Endothelial cell of umbilical vein (primary cell): ENCODE measurements at regions of chr12 and their contacts with region 1.

Region 1: DNA sequence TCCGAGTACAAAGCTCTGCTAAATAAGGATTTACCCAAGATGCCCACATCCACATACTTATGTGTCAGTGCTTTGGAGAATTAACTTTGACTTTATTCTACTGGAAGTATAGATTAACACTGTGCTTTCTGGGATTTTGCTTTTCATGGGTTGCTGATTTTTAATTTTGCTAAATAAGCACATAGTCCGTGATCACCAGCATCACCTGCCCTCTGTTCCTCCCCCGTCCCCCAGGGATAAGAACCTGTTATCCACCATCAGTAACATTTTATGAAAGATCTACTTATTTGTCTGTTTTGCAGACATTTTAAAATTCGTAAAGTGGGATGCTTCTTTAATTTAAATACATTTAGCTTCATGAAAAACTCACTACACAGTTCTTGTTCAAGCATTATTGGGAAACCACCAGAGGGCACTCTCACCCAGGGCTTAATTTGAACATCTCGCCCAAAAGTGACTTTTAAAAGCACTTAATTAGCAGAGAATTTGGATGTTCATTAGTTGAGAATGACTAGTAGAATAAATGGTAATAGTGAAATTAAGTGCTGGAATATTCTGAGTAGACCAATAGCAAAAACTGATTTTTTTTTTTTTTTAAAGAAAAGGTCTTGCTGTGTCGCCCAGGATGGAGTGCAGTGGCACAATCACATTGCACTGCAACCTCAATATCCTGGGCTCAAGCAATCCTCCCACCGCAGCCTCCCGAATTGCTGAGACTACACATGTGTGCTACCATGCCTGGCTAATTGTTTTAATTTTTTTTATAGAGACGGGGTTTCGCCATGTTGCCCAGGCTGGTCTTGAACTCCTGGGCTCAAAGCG is 35.7 kb downstream of the MRPL42 start:
- DNase-seq: peak; percentile 57
- H3K4me3 ChIP-seq: no peak overlapping the region
- H3K27ac ChIP-seq: no peak overlapping the region
- H3K4me1 ChIP-seq: no peaks in the 10 kb centered on the region
- H3K27me3 ChIP-seq: no peaks in the 10 kb centered on the region
- CTCF ChIP-seq: peak; percentile 55 to 60
- POLR2A ChIP-seq: no peak

Region 2: GRCh38 chr12:92995258-92995903 is 507.6 kb before region 1 on chr12:
- CTCF ChIA-PET with region 1: no interaction called
- POLR2A ChIA-PET with region 1: no interaction called
- dilution Hi-C with region 1: no loop called
- intact Hi-C with region 1: no loop called
- DNase-seq: no peak
- H3K4me3 ChIP-seq: no peak overlapping the region
- H3K27ac ChIP-seq: no peak overlapping the region
- H3K4me1 ChIP-seq: no peaks in the 10 kb centered on the region
- H3K27me3 ChIP-seq: no peaks in the 10 kb centered on the region
- CTCF ChIP-seq: no peak
- POLR2A ChIP-seq: no peak

Region 3: GRCh38 chr12:93403988-93404803 is 98.8 kb before region 1 on chr12:
- CTCF ChIA-PET with region 1: no interaction called
- POLR2A ChIA-PET with region 1: no interaction called
- dilution Hi-C with region 1: no loop called
- intact Hi-C with region 1: no loop called
- DNase-seq: no peak
- H3K4me3 ChIP-seq: no peak overlapping the region
- H3K27ac ChIP-seq: no peak overlapping the region
- H3K4me1 ChIP-seq: peaks cover 5% of the 10 kb centered on the region
- H3K27me3 ChIP-seq: no peaks in the 10 kb centered on the region
- CTCF ChIP-seq: no peak
- POLR2A ChIP-seq: no peak

Region 4: DNA sequence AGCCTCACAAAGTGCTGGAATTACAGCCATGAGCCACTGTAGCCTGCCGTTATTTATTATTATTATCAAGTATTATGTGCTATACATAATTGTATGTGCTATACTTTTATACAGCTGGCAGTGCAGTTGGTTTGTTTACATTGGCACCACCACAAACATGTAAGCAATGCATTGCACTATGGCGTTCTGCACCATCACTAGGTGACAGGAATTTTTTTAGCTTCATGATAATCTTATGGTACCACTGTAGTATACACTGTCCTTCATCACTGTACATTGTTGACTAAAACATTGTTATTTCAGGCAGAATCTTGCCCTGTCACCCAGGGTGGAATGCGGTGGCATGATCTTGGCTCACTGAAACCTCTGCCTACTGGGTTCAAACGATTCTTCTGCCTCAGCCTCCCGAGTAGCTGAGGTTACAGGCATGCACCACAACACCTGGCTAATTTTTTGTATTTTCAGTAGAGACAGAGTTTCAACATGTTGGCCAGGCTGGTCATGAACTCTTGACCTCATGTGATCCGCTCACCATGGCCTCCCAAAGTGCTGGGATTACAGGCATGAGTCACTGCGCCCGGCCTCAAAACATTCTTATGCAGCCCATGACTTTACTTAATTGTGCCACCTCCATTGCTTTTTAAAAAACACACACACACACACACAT is 18.6 kb before region 1 on chr12:
- CTCF ChIA-PET with region 1: interaction called, 24 read pairs
- POLR2A ChIA-PET with region 1: no interaction called
- dilution Hi-C with region 1: no loop called
- intact Hi-C with region 1: no loop called
- DNase-seq: no peak
- H3K4me3 ChIP-seq: no peak overlapping the region
- H3K27ac ChIP-seq: no peak overlapping the region
- H3K4me1 ChIP-seq: no peaks in the 10 kb centered on the region
- H3K27me3 ChIP-seq: no peaks in the 10 kb centered on the region
- CTCF ChIP-seq: no peak
- POLR2A ChIP-seq: no peak

Region 5: GRCh38 chr12:93521225-93522080 is 18.4 kb after region 1 on chr12:
- CTCF ChIA-PET with region 1: interaction called, 21 read pairs
- POLR2A ChIA-PET with region 1: no interaction called
- dilution Hi-C with region 1: no loop called
- intact Hi-C with region 1: no loop called
- DNase-seq: no peak
- H3K4me3 ChIP-seq: no peak overlapping the region
- H3K27ac ChIP-seq: no peak overlapping the region
- H3K4me1 ChIP-seq: no peaks in the 10 kb centered on the region
- H3K27me3 ChIP-seq: peaks cover 2% of the 10 kb centered on the region in 2 experiments
- CTCF ChIP-seq: no peak
- POLR2A ChIP-seq: no peak

Region 6: DNA sequence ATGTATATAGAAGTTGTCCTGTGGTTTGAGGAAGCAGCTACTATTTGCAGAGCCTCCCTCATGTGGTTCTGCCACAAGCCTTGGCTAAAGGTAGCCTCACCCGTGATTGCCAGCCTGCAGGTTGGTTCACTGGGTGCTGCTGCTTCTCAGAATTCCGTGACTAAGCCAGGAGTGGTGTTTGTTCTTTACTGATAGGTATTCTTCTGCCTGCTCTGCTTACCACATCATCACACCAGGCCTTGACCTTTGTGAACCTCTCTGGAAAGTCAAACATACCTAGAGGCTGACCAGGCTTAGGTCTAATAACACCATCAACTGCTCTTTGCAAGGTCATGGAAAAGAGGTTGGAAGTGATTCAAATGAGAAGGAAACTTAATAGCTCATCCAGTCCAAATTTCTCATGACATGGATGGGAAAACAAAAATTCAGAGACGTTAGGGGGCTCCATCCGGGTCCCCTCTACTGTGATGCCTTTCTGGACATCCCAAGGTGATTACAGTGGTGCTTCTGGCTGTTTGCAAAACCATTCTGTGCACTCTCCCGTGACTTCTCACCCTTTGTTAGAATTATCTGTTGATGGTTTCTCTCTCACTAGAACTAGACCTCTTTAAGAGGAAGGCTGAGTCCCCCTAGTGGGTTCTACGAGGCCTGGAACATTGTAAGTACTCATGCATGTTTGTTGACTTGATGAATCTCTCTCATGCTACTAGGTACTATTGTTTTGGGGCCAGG is 61.0 kb after region 1 on chr12:
- CTCF ChIA-PET with region 1: interaction called, 42 read pairs
- POLR2A ChIA-PET with region 1: no interaction called
- dilution Hi-C with region 1: no loop called
- intact Hi-C with region 1: no loop called
- DNase-seq: no peak
- H3K4me3 ChIP-seq: no peak overlapping the region
- H3K27ac ChIP-seq: no peak overlapping the region
- H3K4me1 ChIP-seq: no peaks in the 10 kb centered on the region
- H3K27me3 ChIP-seq: peaks cover 8 to 10% of the 10 kb centered on the region in 2 experiments
- CTCF ChIP-seq: peak in 1 of 2 donors; percentile 11
- POLR2A ChIP-seq: no peak

Region 7: GRCh38 chr12:93677195-93678064 is 174.4 kb after region 1 on chr12 and contains the start of gene CRADD:
- CTCF ChIA-PET with region 1: interaction called, 4 read pairs
- POLR2A ChIA-PET with region 1: no interaction called
- dilution Hi-C with region 1: no loop called
- intact Hi-C with region 1: loop called (anchors 2 kb)
- DNase-seq: peak; percentile 97
- H3K4me3 ChIP-seq: peak within 1 kb of the TSS; percentile 43 to 68 (median 67)
- H3K27ac ChIP-seq: peak within 1 kb of the TSS; percentile 82
- H3K4me1 ChIP-seq: peaks cover 10% of the 10 kb centered on the region
- H3K27me3 ChIP-seq: peaks cover 1 to 7% of the 10 kb centered on the region in 2 experiments
- CTCF ChIP-seq: no peak
- POLR2A ChIP-seq: peak; percentile 73
- total RNA-seq, gene CRADD: 8.0 and 11.7 TPM in 2 replicates

Region 8: DNA sequence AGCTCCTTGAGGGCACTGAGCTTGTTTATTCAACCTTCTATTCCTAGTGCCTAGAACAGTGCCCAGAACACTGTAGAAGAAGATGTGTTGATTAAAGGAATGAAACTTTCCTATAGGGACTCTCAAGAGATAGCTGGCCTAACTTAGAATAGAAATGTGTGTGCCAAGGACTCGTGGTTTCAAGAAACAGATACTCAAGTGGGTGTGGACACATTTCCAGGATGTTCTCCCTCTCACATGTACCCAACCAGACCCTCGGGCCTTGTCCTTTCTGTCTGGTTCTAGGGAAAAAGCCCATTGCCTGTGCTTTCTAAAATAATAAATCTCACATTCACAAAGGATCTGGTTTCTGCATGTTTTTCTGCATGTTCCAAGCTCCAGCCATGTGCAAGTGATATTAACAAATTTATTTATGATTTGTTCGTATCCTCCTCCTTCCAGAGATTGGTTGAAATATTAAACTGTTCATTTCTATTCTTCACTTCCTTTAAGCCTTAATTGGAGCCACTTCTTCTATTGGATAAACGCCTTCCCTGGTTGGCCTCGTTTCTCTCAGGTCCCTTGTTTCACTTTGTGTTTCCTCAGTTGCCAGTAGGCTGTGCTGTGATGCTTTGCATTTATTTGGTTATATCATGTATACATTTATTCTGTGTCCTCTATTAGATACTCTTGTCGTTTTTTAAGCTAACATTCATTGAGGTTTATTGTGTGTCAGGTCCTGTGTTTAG is 263.9 kb after region 1 on chr12:
- CTCF ChIA-PET with region 1: interaction called, 44 read pairs
- POLR2A ChIA-PET with region 1: no interaction called
- dilution Hi-C with region 1: no loop called
- intact Hi-C with region 1: loop called (anchors 2 kb)
- DNase-seq: peak; percentile 68
- H3K4me3 ChIP-seq: no peak overlapping the region
- H3K27ac ChIP-seq: no peak overlapping the region
- H3K4me1 ChIP-seq: peaks cover 7% of the 10 kb centered on the region
- H3K27me3 ChIP-seq: no peaks in the 10 kb centered on the region
- CTCF ChIP-seq: peak; percentile 46 to 53
- POLR2A ChIP-seq: no peak

Region 9: DNA sequence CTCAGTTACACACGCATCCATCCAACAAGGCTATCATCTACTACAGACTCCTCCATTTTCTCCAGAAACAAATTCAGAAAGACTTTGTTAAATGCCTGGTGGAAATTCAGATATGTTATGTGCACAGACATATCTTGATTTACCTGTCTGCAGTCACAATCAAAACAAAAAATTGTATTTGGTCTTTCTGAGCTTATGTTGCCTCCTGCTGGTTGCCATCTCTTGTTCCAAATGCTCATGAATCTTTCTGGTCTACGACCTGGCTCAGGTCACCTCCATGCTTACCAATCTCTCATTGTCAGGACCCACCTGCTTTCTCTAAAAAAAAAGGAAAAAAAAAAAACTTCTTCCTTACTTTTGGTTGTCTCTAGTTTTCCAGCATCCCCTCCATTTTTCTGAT is 476.2 kb after region 1 on chr12:
- CTCF ChIA-PET with region 1: interaction called, 32 read pairs
- POLR2A ChIA-PET with region 1: no interaction called
- dilution Hi-C with region 1: no loop called
- intact Hi-C with region 1: loop called (anchors 2 kb)
- DNase-seq: peak; percentile 43
- H3K4me3 ChIP-seq: no peak overlapping the region
- H3K27ac ChIP-seq: no peak overlapping the region
- H3K4me1 ChIP-seq: no peaks in the 10 kb centered on the region
- H3K27me3 ChIP-seq: peaks cover 3 to 9% of the 10 kb centered on the region in 2 experiments
- CTCF ChIP-seq: peak; percentile 26 to 48
- POLR2A ChIP-seq: no peak